GM12878 (cell line): ENCODE measurements at regions of chr3 and their contacts with region 1.

Region 1: GRCh38 chr3:168071591-168072322 is 24.0 kb downstream of the GOLIM4 start:
- DNase-seq: no peak
- ATAC-seq: no peak
- H3K4me3 ChIP-seq: no peak overlapping the region
- H3K27ac ChIP-seq: no peak overlapping the region
- H3K4me1 ChIP-seq: no peaks in the 10 kb centered on the region
- H3K27me3 ChIP-seq: no peaks in the 10 kb centered on the region
- CTCF ChIP-seq: no peak
- EP300 ChIP-seq: no peak
- POLR2A ChIP-seq: no peak
- RAD21 ChIP-seq: no peak

Region 2: GRCh38 chr3:168061332-168061996 is 10.3 kb before region 1 on chr3:
- CTCF ChIA-PET with region 1: interaction called, 3 read pairs
- POLR2A ChIA-PET with region 1: interaction called, 3 read pairs
- RAD21 ChIA-PET with region 1: interaction called, 3 read pairs
- SMC1A ChIA-PET with region 1: interaction called, 22 read pairs
- in situ Hi-C with region 1: no loop called
- intact Hi-C with region 1: no loop called
- DNase-seq: no peak
- ATAC-seq: peak; percentile 96
- H3K4me3 ChIP-seq: peak overlapping the region; percentile 42; the same call in 1 of the 2 replicates
- H3K27ac ChIP-seq: no peak overlapping the region
- H3K4me1 ChIP-seq: peaks cover 10% of the 10 kb centered on the region
- H3K27me3 ChIP-seq: no peaks in the 10 kb centered on the region
- CTCF ChIP-seq: no peak
- EP300 ChIP-seq: peak in 1 of 2 experiments; percentile 48; a peak in 1 of 4 replicates
- POLR2A ChIP-seq: no peak
- RAD21 ChIP-seq: 0 out of 2 replicates have a peak, but pooled peaks have one; percentile 2